ENCODE measurements at regions of chr14 and their contacts with region 1.

Region 1: GRCh38 chr14:100375963-100376735 is 53.0 kb downstream of the SLC25A47 start:
- DNase-seq: peak; percentile 94
- H3K4me3 Mint-ChIP-seq: peak within 1 kb of the TSS; percentile 99
- H3K27ac Mint-ChIP-seq: peak within 1 kb of the TSS; percentile 98
- H3K4me1 Mint-ChIP-seq: peaks cover 45% of the 10 kb centered on the region
- H3K27me3 Mint-ChIP-seq: no peaks in the 10 kb centered on the region

Region 2: GRCh38 chr14:99971087-99971940 is 404.8 kb before region 1 on chr14:
- CTCF ChIA-PET with region 1: no interaction called
- intact Hi-C with region 1: loop called (anchors 5 kb)
- DNase-seq: peak; percentile 86
- H3K4me3 Mint-ChIP-seq: peak overlapping the region; percentile 52
- H3K27ac Mint-ChIP-seq: no peak overlapping the region
- H3K4me1 Mint-ChIP-seq: peaks cover 17% of the 10 kb centered on the region
- H3K27me3 Mint-ChIP-seq: peaks cover 12% of the 10 kb centered on the region

Region 3: DNA sequence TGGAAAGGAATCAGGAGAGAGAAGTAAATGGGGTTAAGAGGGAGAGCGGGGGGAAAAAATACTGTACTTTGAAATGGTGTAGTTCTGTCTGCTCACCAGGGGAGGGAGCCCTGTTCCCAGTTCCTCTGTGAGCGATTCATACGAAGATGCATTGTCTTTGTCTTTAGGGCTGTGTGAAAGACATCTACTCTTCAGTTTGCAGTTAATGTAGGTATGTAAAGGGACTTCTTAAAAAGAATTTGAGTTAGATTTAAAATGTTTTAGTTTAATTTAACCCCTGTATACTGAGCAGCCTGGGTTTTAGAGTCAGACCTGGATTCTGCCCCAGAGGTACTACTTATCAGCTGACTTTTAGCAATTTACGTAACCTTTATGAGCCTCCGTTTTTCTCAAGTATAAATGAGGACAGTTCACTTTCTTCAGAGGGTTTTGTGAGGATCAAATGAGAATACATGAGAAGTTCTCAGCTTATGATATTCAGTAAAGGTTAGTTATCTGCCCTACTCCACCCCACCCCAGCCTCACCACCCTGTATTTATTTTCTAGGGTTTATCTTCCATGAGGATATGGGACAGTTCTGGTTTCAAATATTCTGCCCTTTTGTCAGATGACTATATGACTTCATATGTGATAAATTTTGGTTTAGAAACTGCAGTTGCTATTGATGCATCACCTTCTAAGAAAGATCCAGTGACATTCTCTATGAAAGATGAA is 393.5 kb before region 1 on chr14:
- CTCF ChIA-PET with region 1: no interaction called
- intact Hi-C with region 1: loop called (anchors 1 kb)
- DNase-seq: peak; percentile 76
- H3K4me3 Mint-ChIP-seq: no peak overlapping the region
- H3K27ac Mint-ChIP-seq: no peak overlapping the region
- H3K4me1 Mint-ChIP-seq: peaks cover 18% of the 10 kb centered on the region
- H3K27me3 Mint-ChIP-seq: no peaks in the 10 kb centered on the region

Region 4: GRCh38 chr14:100221533-100222223 is 154.5 kb before region 1 on chr14:
- CTCF ChIA-PET with region 1: no interaction called
- intact Hi-C with region 1: loop called (anchors 5 kb)
- DNase-seq: peak; percentile 81
- H3K4me3 Mint-ChIP-seq: no peak overlapping the region
- H3K27ac Mint-ChIP-seq: no peak overlapping the region
- H3K4me1 Mint-ChIP-seq: peaks cover 8% of the 10 kb centered on the region
- H3K27me3 Mint-ChIP-seq: no peaks in the 10 kb centered on the region

Region 5: GRCh38 chr14:100246826-100247428 is 129.2 kb before region 1 on chr14:
- CTCF ChIA-PET with region 1: no interaction called
- intact Hi-C with region 1: no loop called
- DNase-seq: no peak
- H3K4me3 Mint-ChIP-seq: no peak overlapping the region
- H3K27ac Mint-ChIP-seq: peak overlapping the region; percentile 48
- H3K4me1 Mint-ChIP-seq: peaks cover 72% of the 10 kb centered on the region
- H3K27me3 Mint-ChIP-seq: no peaks in the 10 kb centered on the region

Region 6: DNA sequence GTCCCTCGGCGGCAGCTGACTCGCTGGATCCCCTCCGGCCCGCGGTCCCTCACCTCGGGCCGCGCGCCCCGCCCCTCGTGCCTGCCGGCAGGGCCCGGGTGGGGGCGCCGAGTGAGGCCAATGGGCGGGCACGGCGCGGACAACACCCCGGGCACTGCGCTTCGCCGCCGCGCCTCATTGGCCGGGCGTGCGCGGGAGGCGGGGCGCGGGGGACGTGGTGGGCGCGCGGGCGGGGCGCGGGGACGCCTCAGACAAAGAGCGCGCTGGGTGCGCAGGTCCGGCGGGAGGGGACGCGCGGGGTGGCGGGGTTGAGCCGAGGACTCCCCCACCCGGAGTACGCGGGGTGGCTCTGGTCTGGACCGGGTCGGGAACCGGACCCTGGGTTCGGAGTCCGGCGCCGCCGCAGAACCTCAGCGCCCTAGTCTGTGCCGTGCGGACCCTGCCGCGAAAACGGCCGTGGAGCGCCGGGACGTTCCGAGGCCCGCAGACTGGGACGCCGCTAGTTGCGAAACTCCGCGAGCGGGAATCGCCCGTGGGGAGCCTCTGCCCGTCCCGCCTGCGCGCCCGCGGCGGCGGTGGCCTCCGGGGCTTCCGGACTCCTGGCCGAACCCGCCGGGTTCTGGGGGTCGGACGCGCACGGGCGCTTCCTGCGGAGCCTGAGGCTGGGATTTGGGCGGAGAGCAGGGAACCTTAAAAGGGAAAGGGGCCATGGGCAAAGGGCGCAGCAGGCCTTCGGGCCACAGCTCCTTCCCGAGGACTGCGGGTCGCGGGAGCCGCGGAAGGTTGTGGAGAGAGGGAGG is 69.5 kb before region 1 on chr14 and contains the start of gene SLC25A29:
- CTCF ChIA-PET with region 1: interaction called, 5 read pairs
- intact Hi-C with region 1: loop called (anchors 1 kb)
- DNase-seq: peak; percentile 55
- H3K4me3 Mint-ChIP-seq: peak within 1 kb of the TSS; percentile 68
- H3K27ac Mint-ChIP-seq: peak within 1 kb of the TSS; percentile 36
- H3K4me1 Mint-ChIP-seq: peaks cover 11% of the 10 kb centered on the region
- H3K27me3 Mint-ChIP-seq: peaks cover 10% of the 10 kb centered on the region
- total RNA-seq, gene SLC25A29: 8.9 to 9.8 TPM

Region 7: GRCh38 chr14:100341301-100342031 is 34.7 kb before region 1 on chr14:
- CTCF ChIA-PET with region 1: no interaction called
- intact Hi-C with region 1: loop called (anchors 1 kb)
- DNase-seq: peak; percentile 70
- H3K4me3 Mint-ChIP-seq: no peak overlapping the region
- H3K27ac Mint-ChIP-seq: peak overlapping the region; percentile 89
- H3K4me1 Mint-ChIP-seq: peaks cover 45% of the 10 kb centered on the region
- H3K27me3 Mint-ChIP-seq: no peaks in the 10 kb centered on the region

Region 8: GRCh38 chr14:101761032-101761880 is 1385.1 kb after region 1 on chr14 and contains the start of gene PPP2R5C:
- CTCF ChIA-PET with region 1: no interaction called
- intact Hi-C with region 1: no loop called
- DNase-seq: peak; percentile 85
- H3K4me3 Mint-ChIP-seq: peak within 1 kb of the TSS; percentile 91
- H3K27ac Mint-ChIP-seq: peak within 1 kb of the TSS; percentile 79
- H3K4me1 Mint-ChIP-seq: peaks cover 42% of the 10 kb centered on the region
- H3K27me3 Mint-ChIP-seq: no peaks in the 10 kb centered on the region
- total RNA-seq, gene PPP2R5C: 280 to 294 TPM

Measured in activated naive CD4-positive, alpha-beta T cell treated with anti-CD3 and anti-CD28 coated beads for 36 hours (primary cell).